Naive thymus-derived CD8-positive, alpha-beta T cell (primary cell): ENCODE measurements at regions of chr11 and their contacts with region 1.

Region 1: GRCh38 chr11:67420646-67421420 is 5.4 kb downstream of the CARNS1 start:
- DNase-seq: peak; percentile 97 to 100 (median 99)
- ATAC-seq: peak; percentile 64 to 76
- H3K4me3 Mint-ChIP-seq: peak overlapping the region; percentile 76 to 94 (median 86)
- H3K27ac Mint-ChIP-seq: peak overlapping the region; percentile 80 to 100 (median 93)
- H3K4me1 Mint-ChIP-seq: peaks cover 23 to 67% (median 58%) of the 10 kb centered on the region in 4 donors
- H3K27me3 Mint-ChIP-seq: no peaks in the 10 kb centered on the region

Region 2: GRCh38 chr11:67409261-67409666 is 11.6 kb before region 1 on chr11:
- POLR2A ChIA-PET with region 1: interaction called, 2,390 read pairs
- DNase-seq: peak; percentile 46 to 90 (median 76)
- ATAC-seq: peak; percentile 73 to 85
- H3K4me3 Mint-ChIP-seq: peak overlapping the region; percentile 93 to 99 (median 98)
- H3K27ac Mint-ChIP-seq: peak overlapping the region; percentile 53 to 98 (median 94)
- H3K4me1 Mint-ChIP-seq: peaks cover 44 to 96% (median 88%) of the 10 kb centered on the region in 4 donors
- H3K27me3 Mint-ChIP-seq: no peaks in the 10 kb centered on the region

Region 3: GRCh38 chr11:67458266-67458665 is 37.4 kb after region 1 on chr11:
- POLR2A ChIA-PET with region 1: interaction called, 14 read pairs
- DNase-seq: peak in 1 of 10 donors; percentile 51
- ATAC-seq: no peak
- H3K4me3 Mint-ChIP-seq: no peak overlapping the region
- H3K27ac Mint-ChIP-seq: no peak overlapping the region
- H3K4me1 Mint-ChIP-seq: peaks cover 0 to 34% (median 7%) of the 10 kb centered on the region in 4 donors
- H3K27me3 Mint-ChIP-seq: no peaks in the 10 kb centered on the region